Common myeloid progenitor, CD34-positive (primary cell): ENCODE measurements at regions of chr7 and their contacts with region 1.

Region 1: DNA sequence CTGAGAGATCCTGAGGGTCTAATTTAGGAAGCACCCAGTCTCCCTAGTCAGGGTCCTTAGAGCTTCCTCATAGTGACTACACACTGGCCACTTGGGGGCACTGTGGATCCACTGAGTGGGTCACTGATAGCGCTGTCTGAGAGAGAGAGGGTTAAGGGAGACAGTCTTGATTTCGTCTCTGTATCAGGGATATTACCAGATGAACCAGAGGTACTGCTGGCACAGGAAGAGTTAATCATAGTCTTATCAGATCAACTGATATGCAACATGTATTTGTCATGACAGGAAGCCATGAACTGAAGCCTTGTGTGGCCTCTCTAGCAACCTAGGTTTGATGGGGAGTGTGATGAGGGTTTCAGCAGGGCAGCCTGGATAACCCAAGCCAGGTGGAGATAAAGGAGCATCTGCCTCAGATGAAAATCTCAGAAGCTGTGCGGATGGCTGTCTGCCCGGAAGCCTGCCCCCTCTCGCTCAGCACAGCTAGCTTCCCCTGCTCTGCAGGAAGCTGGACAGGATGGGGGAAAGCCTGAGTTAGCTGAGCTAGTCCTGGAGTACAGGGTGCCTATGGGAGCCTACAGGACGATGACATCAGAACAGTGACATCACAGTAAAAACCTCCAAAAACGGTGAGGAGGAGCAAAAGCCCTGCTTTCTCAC is 214.0 kb upstream of the PRSS1 start:
- DNase-seq: peak; percentile 88 to 94 (median 92)
- H3K4me3 ChIP-seq: peak overlapping the region in 3 of 7 experiments; percentile 14 to 41 (median 38)
- H3K27ac ChIP-seq: peak overlapping the region in 1 of 2 experiments; percentile 2
- H3K4me1 ChIP-seq: peaks cover 0 to 12% (median 12%) of the 10 kb centered on the region in 4 experiments
- H3K27me3 ChIP-seq: no peaks in the 10 kb centered on the region

Region 2: DNA sequence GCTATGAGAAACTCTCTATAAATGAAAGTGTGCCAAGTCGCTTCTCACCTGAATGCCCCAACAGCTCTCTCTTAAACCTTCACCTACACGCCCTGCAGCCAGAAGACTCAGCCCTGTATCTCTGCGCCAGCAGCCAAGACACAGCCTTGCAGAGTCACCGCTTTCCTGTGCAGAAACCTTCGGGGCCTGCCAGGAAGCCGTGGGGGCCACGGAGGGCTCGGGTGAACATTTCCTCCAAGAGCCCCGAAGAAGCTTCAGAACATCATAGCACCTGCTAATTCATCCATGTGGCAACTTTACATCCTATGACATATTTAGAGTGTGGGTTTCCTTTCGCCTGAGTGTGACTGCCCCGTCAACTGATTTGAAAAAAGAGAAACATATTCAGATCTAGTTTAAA is 221.7 kb before region 1 on chr7:
- CTCF ChIA-PET with region 1: no interaction called
- POLR2A ChIA-PET with region 1: no interaction called
- DNase-seq: peak; percentile 87 to 99 (median 97)
- H3K4me3 ChIP-seq: peak overlapping the region in 2 of 7 experiments; percentile 45 to 49
- H3K27ac ChIP-seq: peak overlapping the region; percentile 10 to 59
- H3K4me1 ChIP-seq: peaks cover 12 to 47% (median 43%) of the 10 kb centered on the region in 4 experiments
- H3K27me3 ChIP-seq: no peaks in the 10 kb centered on the region

Region 3: GRCh38 chr7:142431491-142431890 is 103.8 kb before region 1 on chr7:
- CTCF ChIA-PET with region 1: no interaction called
- POLR2A ChIA-PET with region 1: no interaction called
- DNase-seq: no peak
- H3K4me3 ChIP-seq: no peak overlapping the region
- H3K27ac ChIP-seq: no peak overlapping the region
- H3K4me1 ChIP-seq: peaks cover 0 to 39% (median 15%) of the 10 kb centered on the region in 4 experiments
- H3K27me3 ChIP-seq: no peaks in the 10 kb centered on the region

Region 4: GRCh38 chr7:142496545-142497041 is 38.7 kb before region 1 on chr7:
- CTCF ChIA-PET with region 1: interaction called, 10 read pairs
- POLR2A ChIA-PET with region 1: no interaction called
- DNase-seq: peak; percentile 70 to 84 (median 83)
- H3K4me3 ChIP-seq: peak overlapping the region in 4 of 7 experiments; percentile 21 to 57 (median 36)
- H3K27ac ChIP-seq: peak overlapping the region; percentile 27 to 32
- H3K4me1 ChIP-seq: peaks cover 11 to 69% (median 52%) of the 10 kb centered on the region in 4 experiments
- H3K27me3 ChIP-seq: no peaks in the 10 kb centered on the region

Region 5: GRCh38 chr7:142557971-142558582 is 22.8 kb after region 1 on chr7:
- CTCF ChIA-PET with region 1: interaction called, 47 read pairs
- POLR2A ChIA-PET with region 1: interaction called, 4 read pairs
- DNase-seq: peak; percentile 71 to 77 (median 75)
- H3K4me3 ChIP-seq: peak overlapping the region in 6 of 7 experiments; percentile 17 to 82 (median 65)
- H3K27ac ChIP-seq: peak overlapping the region; percentile 49 to 77
- H3K4me1 ChIP-seq: peaks cover 18 to 94% (median 80%) of the 10 kb centered on the region in 4 experiments
- H3K27me3 ChIP-seq: no peaks in the 10 kb centered on the region

Region 6: DNA sequence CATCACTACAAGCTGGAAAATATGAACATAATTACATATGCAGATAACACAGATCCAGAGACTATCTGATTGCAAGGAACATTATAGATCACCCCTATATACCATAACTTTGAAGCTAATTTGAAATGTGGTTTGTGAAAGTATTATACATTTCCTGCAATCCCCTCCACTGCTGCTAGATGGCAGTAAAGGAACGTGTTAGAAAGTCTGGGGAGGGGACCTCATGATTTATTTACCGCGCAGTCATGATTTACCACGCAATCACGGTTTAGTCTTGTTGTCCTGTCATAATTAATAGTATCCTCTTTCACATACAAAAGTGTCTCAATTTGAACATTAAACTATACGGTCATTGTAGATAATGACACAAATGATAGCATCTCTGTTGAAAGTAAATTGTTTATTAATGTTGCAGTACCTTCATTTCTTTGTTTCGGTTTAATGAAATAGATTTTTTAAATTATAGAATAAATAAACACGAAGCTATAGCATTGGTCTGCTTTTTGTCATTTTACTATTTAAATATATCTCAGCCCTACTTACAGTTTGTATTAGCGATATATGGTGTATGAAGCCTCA is 68.7 kb after region 1 on chr7:
- CTCF ChIA-PET with region 1: interaction called, 50 read pairs
- POLR2A ChIA-PET with region 1: no interaction called
- DNase-seq: peak; percentile 68 to 87 (median 83)
- H3K4me3 ChIP-seq: no peak overlapping the region
- H3K27ac ChIP-seq: no peak overlapping the region
- H3K4me1 ChIP-seq: peaks cover 0 to 29% (median 22%) of the 10 kb centered on the region in 4 experiments
- H3K27me3 ChIP-seq: no peaks in the 10 kb centered on the region

Region 7: DNA sequence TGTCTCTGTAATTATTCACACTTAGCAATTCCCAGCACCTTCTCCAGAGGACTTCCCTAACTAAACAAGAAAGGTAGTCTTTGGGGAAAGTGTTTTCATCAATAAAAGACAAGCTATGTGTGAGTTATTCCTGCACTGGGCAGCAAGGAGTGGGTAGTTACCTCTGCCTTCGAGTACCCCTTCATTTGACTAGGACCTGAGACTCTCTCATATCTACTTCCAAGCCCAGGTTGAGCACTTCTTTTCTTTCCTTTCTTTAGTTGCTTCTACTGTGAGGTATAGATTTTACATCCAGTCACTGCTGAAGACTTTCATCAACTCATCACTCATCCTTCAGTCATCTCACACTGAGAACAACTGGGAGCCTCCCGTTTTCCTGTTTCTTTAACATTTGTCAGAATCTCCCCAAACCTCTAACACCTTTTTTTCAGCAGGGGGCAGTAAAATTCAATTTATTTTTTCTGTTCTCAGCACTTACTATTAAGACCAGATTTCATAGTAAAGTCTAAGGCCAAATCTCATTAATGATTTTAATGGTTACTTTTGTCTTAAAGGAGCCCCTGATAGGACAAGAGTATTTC is 133.9 kb after region 1 on chr7:
- CTCF ChIA-PET with region 1: interaction called, 13 read pairs
- POLR2A ChIA-PET with region 1: no interaction called
- DNase-seq: peak; percentile 31 to 50 (median 49)
- H3K4me3 ChIP-seq: no peak overlapping the region
- H3K27ac ChIP-seq: no peak overlapping the region
- H3K4me1 ChIP-seq: peaks cover 17 to 43% (median 34%) of the 10 kb centered on the region in 4 experiments
- H3K27me3 ChIP-seq: no peaks in the 10 kb centered on the region

Region 8: DNA sequence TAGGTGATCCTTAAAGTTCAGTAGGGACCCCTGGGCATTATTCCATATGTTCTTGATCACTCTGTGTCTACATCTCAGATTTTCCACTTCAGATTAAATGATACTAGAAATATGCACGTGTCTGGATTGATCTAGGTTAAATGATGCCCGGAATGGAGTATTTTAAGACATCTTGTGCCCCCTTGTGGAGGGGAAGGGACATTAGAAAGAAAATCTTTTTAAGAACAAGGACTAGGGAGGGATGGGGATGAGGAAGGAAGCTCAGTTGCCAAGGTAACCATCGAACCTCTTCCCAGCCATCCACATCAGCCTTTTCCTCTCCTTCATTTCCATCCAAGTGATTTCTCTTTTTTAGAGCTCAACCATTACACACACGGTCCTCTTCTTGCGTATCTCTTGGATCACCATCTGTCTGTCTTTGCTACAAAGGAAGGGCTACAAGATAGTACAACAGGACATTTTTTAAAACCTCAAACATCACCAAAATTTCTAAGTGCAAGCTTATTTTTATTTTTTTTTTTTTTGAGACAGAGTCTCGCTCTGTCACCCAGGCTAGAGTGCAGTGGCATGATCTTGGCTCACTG is 276.0 kb after region 1 on chr7:
- CTCF ChIA-PET with region 1: interaction called, 18 read pairs
- POLR2A ChIA-PET with region 1: no interaction called
- DNase-seq: peak; percentile 59 to 69 (median 68)
- H3K4me3 ChIP-seq: no peak overlapping the region
- H3K27ac ChIP-seq: no peak overlapping the region
- H3K4me1 ChIP-seq: peaks cover 41 to 45% (median 42%) of the 10 kb centered on the region in 4 experiments
- H3K27me3 ChIP-seq: no peaks in the 10 kb centered on the region

Region 9: DNA sequence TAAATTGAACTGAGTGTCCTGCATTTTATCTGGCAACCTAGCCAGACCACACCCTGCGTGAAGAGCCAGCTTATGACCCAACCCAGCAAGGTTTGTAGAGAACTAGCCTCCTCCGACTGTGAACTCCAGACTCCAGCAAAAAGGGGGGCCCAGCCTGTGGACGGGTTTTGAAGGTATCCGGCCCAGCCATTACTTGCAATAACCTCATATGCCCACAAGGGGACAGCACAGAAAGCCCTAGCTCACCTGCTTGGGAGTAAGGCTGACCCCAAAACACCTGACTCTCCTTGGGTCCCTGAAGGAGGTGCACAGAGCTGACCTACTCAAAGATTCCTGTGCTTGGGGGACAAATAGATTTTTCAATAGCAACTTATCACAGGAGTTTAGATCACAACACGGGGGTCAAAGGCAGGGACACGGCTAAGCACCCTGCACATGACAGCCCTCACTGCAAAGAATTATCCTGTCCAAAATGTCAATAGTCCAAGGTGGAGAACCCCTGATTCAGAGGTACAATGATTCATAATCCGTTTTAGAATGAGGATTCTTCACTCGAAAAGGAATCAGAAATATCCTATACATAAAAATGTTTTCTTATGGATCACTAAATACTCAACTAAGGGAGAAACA is 345.7 kb after region 1 on chr7:
- CTCF ChIA-PET with region 1: no interaction called
- POLR2A ChIA-PET with region 1: no interaction called
- DNase-seq: peak; percentile 34 to 70 (median 61)
- H3K4me3 ChIP-seq: no peak overlapping the region
- H3K27ac ChIP-seq: no peak overlapping the region
- H3K4me1 ChIP-seq: no peaks in the 10 kb centered on the region
- H3K27me3 ChIP-seq: peaks cover 0 to 6% (median 0%) of the 10 kb centered on the region in 5 experiments